Transverse colon (tissue), 4 donors: ENCODE measurements at regions of chr10 and their contacts with region 1.

Region 1: GRCh38 chr10:43348511-43349312 is 22.7 kb upstream of the FXYD4 start:
- DNase-seq: peak; percentile 91
- H3K4me3 ChIP-seq: no peak overlapping the region
- H3K27ac ChIP-seq: no peak overlapping the region
- H3K4me1 ChIP-seq: peaks cover 0 to 6% (median 5%) of the 10 kb centered on the region in 4 donors
- H3K27me3 ChIP-seq: peaks cover 6% of the 10 kb centered on the region
- CTCF ChIP-seq: peak; percentile 85 to 92 (median 90)
- EP300 ChIP-seq: no peak
- POLR2A ChIP-seq: no peak

Region 2: GRCh38 chr10:42827201-42827600 is 521.5 kb before region 1 on chr10:
- in situ Hi-C with region 1: no loop called
- intact Hi-C with region 1: no loop called
- DNase-seq: no peak
- H3K4me3 ChIP-seq: no peak overlapping the region
- H3K27ac ChIP-seq: no peak overlapping the region
- H3K4me1 ChIP-seq: no peaks in the 10 kb centered on the region
- H3K27me3 ChIP-seq: no peaks in the 10 kb centered on the region
- CTCF ChIP-seq: no peak
- EP300 ChIP-seq: no peak
- POLR2A ChIP-seq: no peak

Region 3: DNA sequence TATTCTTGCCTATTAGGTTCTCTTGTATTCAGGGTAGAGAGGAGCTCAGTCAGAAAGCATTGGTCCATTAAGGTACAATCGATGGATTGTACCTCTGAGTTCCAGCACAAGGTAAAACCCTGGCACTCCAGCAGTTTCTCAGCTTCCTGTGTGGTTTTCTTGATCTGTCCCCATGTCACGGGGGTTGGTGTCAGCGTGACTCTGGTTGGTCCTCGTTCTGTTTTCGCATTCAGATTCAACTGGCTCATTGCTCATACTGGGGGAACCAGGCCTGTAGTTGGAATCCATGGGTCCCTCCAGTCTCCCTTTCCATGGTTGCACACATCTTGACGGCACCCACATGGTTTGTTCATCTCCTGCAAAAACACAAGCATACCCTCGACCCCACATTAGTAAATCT is 49.1 kb before region 1 on chr10:
- in situ Hi-C with region 1: loop called (anchors 5 to 10 kb)
- intact Hi-C with region 1: loop called (anchors 5 kb)
- DNase-seq: peak; percentile 26
- H3K4me3 ChIP-seq: no peak overlapping the region
- H3K27ac ChIP-seq: no peak overlapping the region
- H3K4me1 ChIP-seq: peaks cover 0 to 6% (median 3%) of the 10 kb centered on the region in 4 donors
- H3K27me3 ChIP-seq: peaks cover 3% of the 10 kb centered on the region
- CTCF ChIP-seq: no peak
- EP300 ChIP-seq: no peak
- POLR2A ChIP-seq: no peak

Region 4: DNA sequence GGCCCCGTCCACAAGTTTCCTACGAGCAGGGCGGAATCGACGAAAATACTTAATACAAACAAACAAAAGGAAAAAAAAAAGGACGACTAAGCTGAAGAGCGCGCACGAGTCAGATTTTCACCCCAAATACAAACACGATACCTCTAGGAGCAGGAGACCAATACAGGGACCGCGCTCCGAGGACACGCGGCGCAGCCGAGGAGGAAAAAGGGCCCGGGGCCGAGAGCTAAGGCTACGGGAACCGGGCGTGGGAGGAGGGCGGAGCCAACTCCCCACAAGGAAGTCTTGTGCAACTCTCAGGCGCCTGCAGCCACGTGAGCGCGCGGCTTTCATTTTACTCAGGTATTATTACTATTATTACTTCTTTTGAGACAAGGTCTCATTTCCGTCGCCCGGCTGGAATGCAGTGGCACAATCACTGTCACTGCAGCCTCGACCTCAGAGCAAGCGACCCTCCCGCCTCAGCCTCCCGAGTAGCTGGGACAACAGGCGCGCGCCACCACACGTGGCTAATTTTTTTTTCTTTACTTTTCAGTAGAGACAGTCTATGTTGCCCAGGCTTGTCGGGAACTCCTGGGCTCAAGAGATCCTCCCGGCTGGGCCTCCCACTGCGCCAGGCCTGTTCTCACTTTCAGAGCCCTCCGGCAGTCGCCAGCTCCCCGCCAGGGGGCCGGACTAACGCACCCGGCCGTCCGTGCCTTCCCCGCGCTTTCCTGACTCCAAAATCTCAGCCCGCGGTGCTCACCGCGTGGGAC is 59.0 kb after region 1 on chr10:
- in situ Hi-C with region 1: no loop called
- intact Hi-C with region 1: no loop called
- DNase-seq: peak; percentile 93
- H3K4me3 ChIP-seq: peak overlapping the region; percentile 80 to 91 (median 84)
- H3K27ac ChIP-seq: peak overlapping the region; percentile 100
- H3K4me1 ChIP-seq: peaks cover 12 to 46% (median 40%) of the 10 kb centered on the region in 4 donors
- H3K27me3 ChIP-seq: no peaks in the 10 kb centered on the region
- CTCF ChIP-seq: peak; percentile 34 to 79 (median 43)
- EP300 ChIP-seq: peak; percentile 16
- POLR2A ChIP-seq: peak; percentile 91